Heart left ventricle (tissue), 16 donors: ENCODE measurements at regions of chr2 and their contacts with region 1.

Region 1: DNA sequence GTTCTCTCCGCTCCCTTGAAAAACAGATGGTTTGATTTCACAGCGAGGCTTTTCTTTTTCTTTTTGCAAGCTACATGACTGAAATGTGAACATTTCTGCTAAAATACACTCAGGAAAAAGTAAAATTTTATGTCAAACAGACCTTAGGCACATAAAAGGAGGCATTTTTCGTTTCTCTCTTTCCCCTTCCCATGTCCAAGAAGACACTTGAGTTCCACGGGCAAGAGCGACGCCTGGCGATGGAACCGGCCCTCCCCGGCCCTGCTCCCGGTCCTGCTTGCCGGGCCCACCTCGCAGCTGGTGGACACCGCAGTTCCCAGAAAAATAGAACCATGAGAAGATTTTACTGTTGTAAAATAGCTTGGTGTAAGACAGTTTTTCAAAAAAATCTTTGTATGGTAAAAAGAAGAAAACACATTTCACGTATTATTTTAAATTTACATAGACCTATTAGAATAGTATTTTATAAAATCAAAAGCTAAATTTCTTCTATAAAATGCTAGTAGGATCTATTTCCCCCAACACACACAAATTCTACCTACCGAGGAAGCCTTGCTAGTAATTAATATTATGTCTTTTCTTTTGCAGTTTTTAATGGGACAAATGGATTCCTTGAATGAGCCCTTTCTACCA is 2.3 kb upstream of the ALKAL2 start:
- DNase-seq: peak; percentile 64 to 81 (median 73)
- ATAC-seq: peak; percentile 68 to 88 (median 82)
- H3K4me3 ChIP-seq: peak overlapping the region; percentile 8 to 65 (median 50)
- H3K27ac ChIP-seq: no peak overlapping the region
- H3K4me1 ChIP-seq: peaks cover 7 to 36% (median 19%) of the 10 kb centered on the region in 12 donors
- H3K27me3 ChIP-seq: peaks cover 0 to 57% (median 19%) of the 10 kb centered on the region in 9 donors
- CTCF ChIP-seq: peak; percentile 48 to 84 (median 72)
- POLR2A ChIP-seq: no peak

Region 2: DNA sequence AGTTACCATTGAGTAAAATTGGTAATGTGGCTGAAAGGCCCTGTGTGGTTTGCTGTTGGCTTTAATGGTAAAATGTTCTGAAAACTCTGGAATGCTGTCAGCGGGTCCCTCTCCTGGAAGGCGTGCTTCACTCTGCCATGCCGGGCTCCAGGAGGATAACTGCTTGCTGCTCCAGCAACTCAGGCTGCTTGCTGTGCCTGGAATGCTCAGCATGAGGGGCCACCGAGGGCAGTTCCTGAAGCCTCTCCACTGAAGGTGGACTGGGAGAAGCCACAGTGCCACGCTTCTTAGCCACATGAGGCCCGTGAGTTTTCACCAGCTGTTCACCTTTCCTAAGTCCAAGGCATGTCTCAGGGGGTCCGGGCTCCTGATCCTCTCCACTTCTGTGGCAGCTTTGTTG is 153.5 kb before region 1 on chr2:
- intact Hi-C with region 1: no loop called
- DNase-seq: no peak
- ATAC-seq: no peak
- H3K4me3 ChIP-seq: no peak overlapping the region
- H3K27ac ChIP-seq: no peak overlapping the region
- H3K4me1 ChIP-seq: no peaks in the 10 kb centered on the region
- H3K27me3 ChIP-seq: peaks cover 0 to 37% (median 4%) of the 10 kb centered on the region in 9 donors
- CTCF ChIP-seq: no peak
- POLR2A ChIP-seq: no peak

Region 3: DNA sequence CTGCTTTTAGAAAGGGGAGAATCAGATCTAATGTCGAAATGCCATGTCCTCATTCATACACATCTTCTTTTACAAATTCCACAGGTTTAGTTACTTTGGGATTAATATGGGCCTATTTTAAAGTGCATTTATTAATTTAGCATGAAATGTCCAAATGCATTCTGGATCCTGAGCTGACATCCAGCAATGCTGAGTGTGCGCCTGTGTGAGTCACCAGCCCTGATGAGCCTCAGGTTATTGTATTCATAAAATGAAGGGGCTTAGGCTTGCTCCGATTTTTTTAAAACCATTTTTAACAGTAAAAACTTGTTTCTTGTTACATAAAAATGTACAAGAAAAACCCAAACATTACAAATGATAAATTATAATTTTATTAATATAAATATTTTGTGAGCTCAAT is 120.5 kb before region 1 on chr2:
- intact Hi-C with region 1: loop called in 8 of 10 experiments (anchors 2 to 5 kb)
- DNase-seq: no peak
- ATAC-seq: no peak
- H3K4me3 ChIP-seq: no peak overlapping the region
- H3K27ac ChIP-seq: no peak overlapping the region
- H3K4me1 ChIP-seq: no peaks in the 10 kb centered on the region
- H3K27me3 ChIP-seq: peaks cover 0 to 19% (median 0%) of the 10 kb centered on the region in 9 donors
- CTCF ChIP-seq: no peak
- POLR2A ChIP-seq: no peak

Region 4: DNA sequence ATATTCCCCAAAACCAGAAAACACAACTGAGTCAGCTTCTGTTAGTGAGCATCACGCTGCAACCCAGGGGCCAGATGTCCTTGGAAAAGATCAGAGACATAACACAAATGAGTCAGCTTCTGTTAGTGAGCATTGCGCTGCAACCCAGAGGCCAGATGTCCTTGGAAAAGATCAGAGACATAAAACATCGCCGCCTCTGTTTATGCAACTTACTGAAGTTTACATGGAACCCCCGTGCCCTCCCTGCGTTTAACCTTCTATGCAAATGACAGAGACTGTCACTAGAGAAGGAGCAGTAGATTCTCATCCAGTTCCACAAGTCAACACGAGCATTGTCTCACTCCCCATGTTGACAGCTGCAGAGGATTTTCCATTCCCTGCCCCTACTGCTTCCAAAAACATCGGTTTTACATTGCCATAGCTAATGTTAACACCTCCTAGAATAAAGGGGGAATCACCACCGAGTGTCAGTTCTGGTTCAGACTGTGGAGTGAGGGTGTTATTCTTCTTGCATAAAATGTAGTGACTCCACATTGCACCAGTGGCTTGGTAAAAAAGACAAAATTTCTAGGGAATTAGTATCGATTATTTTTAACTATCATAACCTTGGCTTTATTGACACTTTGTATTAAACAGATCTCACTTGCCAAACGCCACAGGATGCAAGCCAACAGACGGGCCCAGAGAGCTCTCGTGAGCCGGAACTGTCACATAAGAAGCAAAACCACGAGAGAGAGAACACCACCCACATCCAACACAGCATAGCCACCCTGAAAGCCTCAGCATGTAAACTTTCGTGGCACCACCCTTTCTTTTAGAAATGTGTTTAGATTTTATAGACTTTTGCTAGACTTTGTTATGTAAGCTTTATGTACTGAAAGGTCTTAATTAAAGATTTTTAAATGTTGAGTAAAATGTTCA is 114.1 kb before region 1 on chr2:
- intact Hi-C with region 1: loop called in 8 of 10 experiments (anchors 2 to 5 kb)
- DNase-seq: no peak
- ATAC-seq: no peak
- H3K4me3 ChIP-seq: no peak overlapping the region
- H3K27ac ChIP-seq: no peak overlapping the region
- H3K4me1 ChIP-seq: peaks cover 0 to 5% (median 0%) of the 10 kb centered on the region in 12 donors
- H3K27me3 ChIP-seq: peaks cover 0 to 14% (median 0%) of the 10 kb centered on the region in 9 donors
- CTCF ChIP-seq: no peak
- POLR2A ChIP-seq: no peak

Region 5: GRCh38 chr2:246489-247144 is 43.6 kb before region 1 on chr2:
- intact Hi-C with region 1: loop called in 7 of 10 experiments (anchors 1 to 10 kb)
- DNase-seq: no peak
- ATAC-seq: no peak
- H3K4me3 ChIP-seq: no peak overlapping the region
- H3K27ac ChIP-seq: no peak overlapping the region
- H3K4me1 ChIP-seq: no peaks in the 10 kb centered on the region
- H3K27me3 ChIP-seq: no peaks in the 10 kb centered on the region
- CTCF ChIP-seq: peak; percentile 25 to 61 (median 46)
- POLR2A ChIP-seq: no peak